Heart left ventricle (tissue), 16 donors: ENCODE measurements at regions of chr10 and their contacts with region 1.

Region 1: GRCh38 chr10:131972474-131973071 is 9.2 kb downstream of the BNIP3 start:
- DNase-seq: peak; percentile 78 to 85 (median 84)
- ATAC-seq: peak; percentile 70 to 89 (median 73)
- H3K4me3 ChIP-seq: peak overlapping the region in 8 of 12 donors; percentile 5 to 24 (median 10)
- H3K27ac ChIP-seq: peak overlapping the region in 11 of 12 donors; percentile 40 to 82 (median 72)
- H3K4me1 ChIP-seq: peaks cover 10 to 55% (median 32%) of the 10 kb centered on the region in 12 donors
- H3K27me3 ChIP-seq: no peaks in the 10 kb centered on the region
- CTCF ChIP-seq: no peak
- POLR2A ChIP-seq: no peak

Region 2: GRCh38 chr10:131909014-131909808 is 63.4 kb before region 1 on chr10:
- intact Hi-C with region 1: loop called in 7 of 10 experiments (anchors 5 to 10 kb)
- DNase-seq: no peak
- ATAC-seq: peak in 3 of 4 donors; percentile 33 to 38 (median 34)
- H3K4me3 ChIP-seq: no peak overlapping the region
- H3K27ac ChIP-seq: no peak overlapping the region
- H3K4me1 ChIP-seq: peaks cover 0 to 79% (median 48%) of the 10 kb centered on the region in 12 donors
- H3K27me3 ChIP-seq: no peaks in the 10 kb centered on the region
- CTCF ChIP-seq: no peak
- POLR2A ChIP-seq: no peak